Activated naive CD4-positive, alpha-beta T cell treated with anti-CD3 and anti-CD28 coated beads, Interleukin-2, amount 10 ng/mL, durations not matched to agents 7 days and 5 days (primary cell): ENCODE measurements at regions of chr10 and their contacts with region 1.

Region 1: DNA sequence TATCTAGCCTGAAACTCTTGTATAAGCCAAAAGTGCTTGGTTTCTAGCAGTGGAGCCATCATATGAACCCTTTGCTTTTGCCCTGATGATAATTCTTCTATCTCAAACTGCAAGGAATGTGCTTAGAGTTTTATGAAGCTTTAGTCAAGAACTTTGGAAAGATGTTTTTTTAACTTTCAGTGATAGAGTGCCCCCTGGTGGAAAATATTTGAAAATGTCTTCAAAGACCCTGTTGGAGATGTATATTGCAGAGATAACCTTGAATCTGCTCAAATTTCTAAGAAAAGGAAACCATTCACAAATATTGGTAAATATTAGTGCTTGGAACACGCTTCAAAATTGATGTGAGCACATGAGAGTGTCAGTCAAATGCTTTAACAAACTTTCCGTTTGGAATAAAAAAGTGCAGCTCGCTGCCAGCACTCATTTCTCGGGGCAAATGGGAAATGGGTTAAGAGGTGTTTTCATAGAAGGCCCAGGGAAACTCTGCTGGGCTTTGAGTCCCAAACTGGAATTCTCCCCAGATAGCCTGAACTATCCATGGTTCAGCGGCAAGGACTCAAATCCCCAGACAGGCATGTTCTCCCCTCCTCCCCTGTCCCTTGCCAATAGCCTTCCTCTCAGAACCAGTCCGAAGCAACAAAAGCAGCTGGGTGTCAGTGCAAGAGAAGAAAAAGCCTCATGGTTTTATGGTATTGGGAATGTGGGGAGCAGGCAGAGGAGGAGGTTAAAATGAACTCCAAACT is 129.3 kb downstream of the MYOF start:
- DNase-seq: no peak
- H3K4me3 Mint-ChIP-seq: no peak overlapping the region
- H3K27ac Mint-ChIP-seq: no peak overlapping the region
- H3K4me1 Mint-ChIP-seq: peaks cover 2% of the 10 kb centered on the region
- H3K27me3 Mint-ChIP-seq: peaks cover 3% of the 10 kb centered on the region

Region 2: GRCh38 chr10:93080350-93081046 is 272.3 kb before region 1 on chr10:
- CTCF ChIA-PET with region 1: interaction called, 12 read pairs
- DNase-seq: peak; percentile 63
- H3K4me3 Mint-ChIP-seq: no peak overlapping the region
- H3K27ac Mint-ChIP-seq: no peak overlapping the region
- H3K4me1 Mint-ChIP-seq: peaks cover 4% of the 10 kb centered on the region
- H3K27me3 Mint-ChIP-seq: peaks cover 61% of the 10 kb centered on the region

Region 3: DNA sequence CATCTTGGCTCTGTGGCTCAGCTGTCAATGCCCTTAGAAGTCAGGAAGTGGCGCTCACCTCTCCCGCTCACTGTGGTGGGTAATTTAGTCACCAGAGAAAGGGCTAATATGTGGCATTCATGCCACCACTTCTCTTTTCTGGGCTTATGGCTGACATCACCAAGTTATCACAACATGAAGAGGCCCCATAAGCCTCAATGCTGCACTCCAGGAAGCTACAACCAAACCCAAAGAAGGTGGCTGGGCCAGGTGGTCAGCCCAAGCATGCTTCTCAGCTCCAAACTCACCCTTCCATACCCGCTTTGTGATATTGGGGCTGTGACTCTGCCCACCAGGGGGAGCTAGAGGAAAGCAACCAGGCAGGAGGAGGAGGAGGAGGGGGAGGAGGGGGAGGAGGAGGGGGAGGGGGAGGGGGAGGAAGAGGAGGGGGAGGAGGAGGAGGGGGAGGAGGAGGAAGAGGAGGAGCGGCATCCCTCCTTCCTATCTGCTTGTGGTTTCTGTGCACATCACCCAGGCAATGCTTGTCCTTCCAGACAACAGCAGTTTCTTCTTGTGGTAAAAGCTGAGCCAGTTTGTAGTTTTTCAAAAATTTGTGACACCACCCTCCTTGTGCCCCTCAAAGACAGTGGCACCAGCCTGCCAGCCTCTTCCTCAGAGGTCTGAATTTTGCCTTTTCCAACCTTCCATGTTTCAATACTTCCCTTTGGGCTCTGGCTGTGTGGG is 237.0 kb before region 1 on chr10:
- CTCF ChIA-PET with region 1: interaction called, 33 read pairs
- DNase-seq: peak; percentile 78
- H3K4me3 Mint-ChIP-seq: no peak overlapping the region
- H3K27ac Mint-ChIP-seq: no peak overlapping the region
- H3K4me1 Mint-ChIP-seq: peaks cover 10% of the 10 kb centered on the region
- H3K27me3 Mint-ChIP-seq: peaks cover 11% of the 10 kb centered on the region

Region 4: GRCh38 chr10:93309062-93309461 is 43.7 kb before region 1 on chr10:
- CTCF ChIA-PET with region 1: no interaction called
- DNase-seq: no peak
- H3K4me3 Mint-ChIP-seq: no peak overlapping the region
- H3K27ac Mint-ChIP-seq: no peak overlapping the region
- H3K4me1 Mint-ChIP-seq: no peaks in the 10 kb centered on the region
- H3K27me3 Mint-ChIP-seq: no peaks in the 10 kb centered on the region

Region 5: DNA sequence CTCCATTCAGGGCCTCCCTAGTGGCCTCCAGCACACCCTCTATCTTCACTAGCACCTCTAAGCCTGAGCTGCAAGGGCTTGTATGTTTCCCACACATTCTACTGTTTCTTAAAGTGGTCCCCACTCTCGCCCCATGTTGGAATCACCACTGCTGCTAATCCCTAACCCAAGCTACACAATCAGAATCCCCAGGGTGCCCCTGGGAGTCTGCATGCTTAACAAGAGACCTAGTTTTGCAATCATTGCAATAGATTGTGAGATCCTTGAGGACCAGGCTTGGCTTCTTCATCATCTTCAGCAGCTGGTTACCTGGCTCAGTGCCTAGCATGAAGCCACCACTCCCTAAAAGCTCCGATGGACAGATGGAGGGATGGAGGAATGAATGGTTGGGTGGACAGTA is 15.4 kb after region 1 on chr10:
- CTCF ChIA-PET with region 1: interaction called, 18 read pairs
- DNase-seq: no peak
- H3K4me3 Mint-ChIP-seq: no peak overlapping the region
- H3K27ac Mint-ChIP-seq: no peak overlapping the region
- H3K4me1 Mint-ChIP-seq: peaks cover 9% of the 10 kb centered on the region
- H3K27me3 Mint-ChIP-seq: no peaks in the 10 kb centered on the region